Aorta (tissue), 5 donors: ENCODE measurements at regions of chr4 and their contacts with region 1.

Region 1: GRCh38 chr4:170047771-170048354 is 21.7 kb upstream of the MFAP3L start:
- DNase-seq: no peak
- ATAC-seq: no peak
- H3K4me3 ChIP-seq: no peak overlapping the region
- H3K27ac ChIP-seq: no peak overlapping the region
- H3K4me1 ChIP-seq: no peaks in the 10 kb centered on the region
- H3K27me3 ChIP-seq: no peaks in the 10 kb centered on the region

Region 2: GRCh38 chr4:169810325-169811323 is 237.2 kb before region 1 on chr4:
- intact Hi-C with region 1: loop called (anchors 2 to 5 kb)
- DNase-seq: no peak
- ATAC-seq: no peak
- H3K4me3 ChIP-seq: peak overlapping the region in 1 of 2 donors; percentile 59
- H3K27ac ChIP-seq: no peak overlapping the region
- H3K4me1 ChIP-seq: no peaks in the 10 kb centered on the region
- H3K27me3 ChIP-seq: no peaks in the 10 kb centered on the region

Region 3: GRCh38 chr4:169902658-169903345 is 145.1 kb before region 1 on chr4:
- intact Hi-C with region 1: loop called (anchors 2 kb)
- DNase-seq: no peak
- ATAC-seq: peak; percentile 69
- H3K4me3 ChIP-seq: no peak overlapping the region
- H3K27ac ChIP-seq: no peak overlapping the region
- H3K4me1 ChIP-seq: no peaks in the 10 kb centered on the region
- H3K27me3 ChIP-seq: no peaks in the 10 kb centered on the region

Region 4: GRCh38 chr4:169993531-169993930 is 54.3 kb before region 1 on chr4:
- intact Hi-C with region 1: no loop called
- DNase-seq: no peak
- ATAC-seq: no peak
- H3K4me3 ChIP-seq: no peak overlapping the region
- H3K27ac ChIP-seq: no peak overlapping the region
- H3K4me1 ChIP-seq: peaks cover 0 to under 1% of the 10 kb centered on the region in 2 donors
- H3K27me3 ChIP-seq: no peaks in the 10 kb centered on the region